Body of pancreas (tissue), 4 donors: ENCODE measurements at regions of chr3 and their contacts with region 1.

Region 1: GRCh38 chr3:133588784-133589465 is 15.4 kb downstream of the CDV3 start:
- DNase-seq: no peak
- ATAC-seq: no peak
- H3K4me3 ChIP-seq: no peak overlapping the region
- H3K27ac ChIP-seq: no peak overlapping the region
- H3K4me1 ChIP-seq: no peaks in the 10 kb centered on the region
- H3K27me3 ChIP-seq: no peaks in the 10 kb centered on the region
- CTCF ChIP-seq: no peak
- POLR2A ChIP-seq: no peak

Region 2: DNA sequence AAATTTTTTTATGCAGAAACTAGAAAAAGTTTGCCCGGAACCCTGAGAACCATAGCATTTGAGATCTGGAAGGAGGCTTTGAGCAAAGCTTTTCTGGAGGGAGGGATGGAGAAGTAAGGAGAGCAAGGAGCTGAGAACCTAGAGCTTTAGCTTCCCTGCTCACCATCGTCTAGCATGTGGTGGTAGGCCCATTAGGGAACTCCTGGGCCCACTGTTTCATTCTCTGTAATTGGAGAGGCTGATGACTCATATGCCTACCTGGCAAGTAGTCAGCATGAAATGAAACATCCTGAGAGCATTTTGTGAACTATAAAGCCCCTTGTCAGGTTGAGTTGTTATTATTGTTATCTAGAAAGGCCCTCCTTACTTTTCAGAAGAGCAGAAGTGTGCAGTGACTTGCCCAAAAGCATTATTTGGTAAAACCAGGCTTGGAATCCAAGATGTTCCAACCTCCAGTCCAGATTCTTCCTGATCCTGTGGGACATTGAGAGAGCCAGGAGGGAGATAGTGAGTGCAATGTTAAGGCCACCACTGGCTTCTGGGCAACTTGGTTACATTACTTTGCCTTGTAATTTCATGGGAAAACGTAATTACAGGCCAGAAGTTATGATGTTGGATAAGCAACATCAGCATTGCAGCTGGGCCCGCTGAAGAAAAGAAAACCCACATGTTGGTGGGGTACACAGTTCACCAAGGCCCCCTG is 293.6 kb before region 1 on chr3:
- intact Hi-C with region 1: no loop called
- DNase-seq: no peak
- ATAC-seq: no peak
- H3K4me3 ChIP-seq: no peak overlapping the region
- H3K27ac ChIP-seq: no peak overlapping the region
- H3K4me1 ChIP-seq: no peaks in the 10 kb centered on the region
- H3K27me3 ChIP-seq: no peaks in the 10 kb centered on the region
- CTCF ChIP-seq: no peak
- POLR2A ChIP-seq: no peak

Region 3: GRCh38 chr3:133464573-133464972 is 124.4 kb before region 1 on chr3:
- intact Hi-C with region 1: loop called (anchors 10 kb)
- DNase-seq: no peak
- ATAC-seq: no peak
- H3K4me3 ChIP-seq: no peak overlapping the region
- H3K27ac ChIP-seq: no peak overlapping the region
- H3K4me1 ChIP-seq: peaks cover 21% of the 10 kb centered on the region
- H3K27me3 ChIP-seq: no peaks in the 10 kb centered on the region
- CTCF ChIP-seq: peak in 4 of 7 experiments; percentile 9 to 25 (median 15)
- POLR2A ChIP-seq: no peak